Naive thymus-derived CD4-positive, alpha-beta T cell (primary cell): ENCODE measurements at regions of chr17 and their contacts with region 1.

Region 1: DNA sequence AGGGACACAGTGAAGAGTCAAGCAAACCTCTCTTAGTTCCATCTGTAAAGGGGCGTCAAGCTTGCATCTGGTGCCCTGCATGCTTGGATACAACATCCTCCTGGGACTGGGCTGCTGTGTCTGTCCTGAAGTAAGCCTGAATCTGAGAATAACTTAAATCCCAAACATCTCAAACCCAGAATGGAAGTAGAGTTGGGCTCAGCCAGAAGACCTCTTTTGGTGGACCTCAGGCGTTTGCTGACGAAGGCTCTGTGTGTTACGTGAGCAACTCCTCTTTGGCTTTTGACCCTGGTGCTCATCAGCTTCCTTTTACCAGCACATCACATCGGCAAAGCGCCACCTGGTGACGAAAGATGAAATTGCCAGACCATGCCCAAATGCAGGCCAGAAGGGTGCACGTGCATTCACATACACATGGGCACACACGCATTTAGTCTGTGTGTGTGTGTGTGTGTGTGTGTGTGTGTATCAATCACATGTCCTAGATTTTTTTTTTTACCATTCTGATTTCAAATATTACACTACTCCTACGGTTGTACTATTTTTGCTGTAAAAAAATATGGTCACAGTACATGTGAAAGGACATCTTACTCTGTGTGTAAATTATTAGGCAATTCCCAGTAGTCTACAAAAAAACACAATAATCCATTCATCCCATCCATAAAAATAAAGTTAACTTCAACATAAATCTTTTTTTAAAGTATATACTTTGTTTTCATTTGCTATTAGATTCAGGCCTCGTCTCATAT is 41.1 kb upstream of the FOXJ1 start:
- DNase-seq: peak; percentile 84 to 94 (median 89)
- ATAC-seq: peak; percentile 92
- H3K4me3 ChIP-seq: no peak overlapping the region
- H3K4me3 Mint-ChIP-seq: peak overlapping the region; percentile 11 to 77 (median 67)
- H3K27ac ChIP-seq: peak overlapping the region; percentile 52
- H3K27ac Mint-ChIP-seq: peak overlapping the region; percentile 91 to 99 (median 96)
- H3K4me1 ChIP-seq: peaks cover 33 to 63% of the 10 kb centered on the region in 2 donors
- H3K4me1 Mint-ChIP-seq: peaks cover 33 to 78% (median 61%) of the 10 kb centered on the region in 7 donors
- H3K27me3 ChIP-seq: no peaks in the 10 kb centered on the region
- H3K27me3 Mint-ChIP-seq: no peaks in the 10 kb centered on the region

Region 2: DNA sequence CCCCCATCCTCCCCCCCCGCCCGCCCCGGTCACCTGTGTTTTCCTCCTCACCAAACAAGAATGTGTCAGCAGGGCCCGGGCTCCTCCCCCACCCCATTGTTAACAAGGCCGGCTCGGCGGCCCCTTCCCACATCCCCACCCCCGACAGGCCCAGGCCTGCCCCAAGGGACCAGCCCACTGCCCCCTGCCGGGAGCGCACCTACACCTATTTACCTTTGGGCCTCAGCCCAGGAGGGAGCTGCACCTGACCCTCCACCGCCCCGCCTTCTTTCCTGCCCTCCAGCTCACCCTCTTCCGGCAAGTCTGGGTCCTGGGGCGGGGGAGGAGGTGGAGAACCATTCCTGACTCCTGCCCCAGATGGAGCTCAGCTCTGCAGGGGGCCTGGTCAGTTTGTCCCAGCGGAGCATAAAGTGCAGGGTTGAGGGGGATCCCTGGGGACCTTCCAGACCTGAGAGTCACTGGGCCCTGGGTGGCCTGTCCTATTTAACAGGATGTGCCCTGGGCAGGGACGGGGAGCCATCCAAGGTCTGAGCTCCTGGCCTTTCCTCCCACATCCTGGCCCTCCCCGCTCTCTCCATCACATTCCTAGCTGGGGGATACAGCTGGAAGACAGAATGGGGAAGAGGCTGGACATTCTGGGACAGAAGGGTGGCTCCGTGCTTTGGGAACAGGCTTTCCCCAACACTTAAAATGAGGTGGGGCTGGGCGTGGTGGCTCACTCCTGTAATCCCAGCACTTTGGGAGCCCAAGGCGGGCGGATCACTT is 49.4 kb before region 1 on chr17:
- CTCF ChIA-PET with region 1: interaction called, 187 read pairs
- POLR2A ChIA-PET with region 1: interaction called, 90 read pairs
- intact Hi-C with region 1: no loop called
- DNase-seq: no peak
- ATAC-seq: no peak
- H3K4me3 ChIP-seq: no peak overlapping the region
- H3K4me3 Mint-ChIP-seq: no peak overlapping the region
- H3K27ac ChIP-seq: no peak overlapping the region
- H3K27ac Mint-ChIP-seq: no peak overlapping the region
- H3K4me1 ChIP-seq: peaks cover 0 to 13% of the 10 kb centered on the region in 2 donors
- H3K4me1 Mint-ChIP-seq: peaks cover 14 to 24% (median 16%) of the 10 kb centered on the region in 7 donors
- H3K27me3 ChIP-seq: no peaks in the 10 kb centered on the region
- H3K27me3 Mint-ChIP-seq: peaks cover 0 to 2% (median 0%) of the 10 kb centered on the region in 5 donors

Region 3: GRCh38 chr17:76166168-76166567 is 16.0 kb before region 1 on chr17:
- CTCF ChIA-PET with region 1: interaction called, 26 read pairs
- POLR2A ChIA-PET with region 1: interaction called, 162 read pairs
- intact Hi-C with region 1: no loop called
- DNase-seq: no peak
- ATAC-seq: no peak
- H3K4me3 ChIP-seq: no peak overlapping the region
- H3K4me3 Mint-ChIP-seq: peak overlapping the region in 1 of 10 donors; percentile 30
- H3K27ac ChIP-seq: no peak overlapping the region
- H3K27ac Mint-ChIP-seq: peak overlapping the region in 6 of 9 donors; percentile 14 to 55 (median 39)
- H3K4me1 ChIP-seq: no peaks in the 10 kb centered on the region
- H3K4me1 Mint-ChIP-seq: peaks cover 7 to 36% (median 24%) of the 10 kb centered on the region in 7 donors
- H3K27me3 ChIP-seq: no peaks in the 10 kb centered on the region
- H3K27me3 Mint-ChIP-seq: no peaks in the 10 kb centered on the region

Region 4: GRCh38 chr17:76246080-76247066 is 64.2 kb after region 1 on chr17:
- CTCF ChIA-PET with region 1: interaction called, 6 read pairs
- POLR2A ChIA-PET with region 1: interaction called, 30 read pairs
- intact Hi-C with region 1: no loop called
- DNase-seq: peak in 7 of 9 donors; percentile 43 to 75 (median 52)
- ATAC-seq: peak; percentile 92
- H3K4me3 ChIP-seq: peak overlapping the region; percentile 8
- H3K4me3 Mint-ChIP-seq: peak overlapping the region; percentile 60 to 84 (median 75)
- H3K27ac ChIP-seq: peak overlapping the region; percentile 61
- H3K27ac Mint-ChIP-seq: peak overlapping the region; percentile 84 to 96 (median 92)
- H3K4me1 ChIP-seq: peaks cover 17 to 56% of the 10 kb centered on the region in 2 donors
- H3K4me1 Mint-ChIP-seq: peaks cover 34 to 84% (median 68%) of the 10 kb centered on the region in 7 donors
- H3K27me3 ChIP-seq: no peaks in the 10 kb centered on the region
- H3K27me3 Mint-ChIP-seq: no peaks in the 10 kb centered on the region

Region 5: GRCh38 chr17:76271669-76272540 is 89.7 kb after region 1 on chr17:
- CTCF ChIA-PET with region 1: interaction called, 36 read pairs
- POLR2A ChIA-PET with region 1: interaction called, 240 read pairs
- intact Hi-C with region 1: loop called in 1 of 2 experiments (anchors 1 kb)
- DNase-seq: peak in 6 of 9 donors; percentile 53 to 79 (median 61)
- ATAC-seq: peak; percentile 54
- H3K4me3 ChIP-seq: peak overlapping the region; percentile 68
- H3K4me3 Mint-ChIP-seq: peak overlapping the region; percentile 75 to 93 (median 82)
- H3K27ac ChIP-seq: peak overlapping the region; percentile 92
- H3K27ac Mint-ChIP-seq: peak overlapping the region; percentile 82 to 94 (median 92)
- H3K4me1 ChIP-seq: peaks cover 65 to 70% of the 10 kb centered on the region in 2 donors
- H3K4me1 Mint-ChIP-seq: peaks cover 37 to 75% (median 71%) of the 10 kb centered on the region in 7 donors
- H3K27me3 ChIP-seq: no peaks in the 10 kb centered on the region
- H3K27me3 Mint-ChIP-seq: peaks cover 0 to 3% (median 0%) of the 10 kb centered on the region in 5 donors